ENCODE measurements at regions of chr16 and their contacts with region 1.

Region 1: GRCh38 chr16:84952335-84953189 is 58.8 kb downstream of the ZDHHC7 start:
- DNase-seq: peak; percentile 80
- ATAC-seq: peak; percentile 89 to 97
- H3K4me3 ChIP-seq: no peak overlapping the region
- H3K27ac ChIP-seq: no peak overlapping the region
- H3K4me1 ChIP-seq: no peaks in the 10 kb centered on the region
- CTCF ChIP-seq: peak; percentile 78
- EP300 ChIP-seq: no peak
- POLR2A ChIP-seq: no peak
- RAD21 ChIP-seq: peak; percentile 68 to 81

Region 2: DNA sequence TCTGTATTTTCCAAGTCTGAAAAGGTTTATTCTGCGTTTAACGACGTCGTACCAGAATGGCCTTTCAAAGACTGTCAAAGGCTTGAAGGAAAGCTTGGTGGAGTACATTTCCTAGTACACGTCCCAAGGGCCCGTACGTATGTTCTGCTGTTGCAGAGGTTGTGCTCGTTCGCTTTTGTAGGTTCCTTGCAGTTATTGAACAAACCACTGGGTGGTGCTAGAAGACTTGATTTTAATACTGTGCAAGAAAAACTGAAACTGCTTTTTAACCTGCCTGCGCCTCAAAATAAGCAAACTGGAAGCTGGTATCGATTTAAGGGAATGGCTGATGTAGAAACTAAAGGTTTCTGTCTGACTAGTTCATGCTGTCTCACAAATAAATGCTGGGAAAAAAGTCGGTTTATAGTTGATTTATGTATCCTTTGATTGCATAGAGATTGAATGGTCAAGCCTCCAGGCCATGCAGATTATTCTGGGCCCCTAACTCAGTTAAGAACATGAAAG is 198.2 kb before region 1 on chr16:
- CTCF ChIA-PET with region 1: interaction called, 219 read pairs
- POLR2A ChIA-PET with region 1: no interaction called
- DNase-seq: peak; percentile 78 to 86
- ATAC-seq: peak; percentile 88 to 90
- H3K4me3 ChIP-seq: no peak overlapping the region
- H3K27ac ChIP-seq: no peak overlapping the region
- H3K4me1 ChIP-seq: peaks cover 25% of the 10 kb centered on the region
- CTCF ChIP-seq: peak; percentile 89
- EP300 ChIP-seq: no peak
- POLR2A ChIP-seq: no peak
- RAD21 ChIP-seq: peak; percentile 79 to 86

Region 3: GRCh38 chr16:84795329-84796053 is 157.1 kb before region 1 on chr16:
- CTCF ChIA-PET with region 1: interaction called, 18 read pairs
- POLR2A ChIA-PET with region 1: no interaction called
- DNase-seq: no peak
- ATAC-seq: no peak; a peak in 1 of 6 replicates
- H3K4me3 ChIP-seq: no peak overlapping the region
- H3K27ac ChIP-seq: no peak overlapping the region
- H3K4me1 ChIP-seq: no peaks in the 10 kb centered on the region
- CTCF ChIP-seq: no peak
- EP300 ChIP-seq: no peak
- POLR2A ChIP-seq: no peak
- RAD21 ChIP-seq: no peak

Region 4: GRCh38 chr16:84919269-84919668 is 33.3 kb before region 1 on chr16:
- CTCF ChIA-PET with region 1: interaction called, 90 read pairs
- POLR2A ChIA-PET with region 1: no interaction called
- DNase-seq: no peak
- ATAC-seq: no peak
- H3K4me3 ChIP-seq: no peak overlapping the region
- H3K27ac ChIP-seq: no peak overlapping the region
- H3K4me1 ChIP-seq: no peaks in the 10 kb centered on the region
- CTCF ChIP-seq: no peak
- EP300 ChIP-seq: no peak
- POLR2A ChIP-seq: no peak
- RAD21 ChIP-seq: no peak

Region 5: GRCh38 chr16:84940670-84941551 is 11.7 kb before region 1 on chr16:
- CTCF ChIA-PET with region 1: interaction called, 42 read pairs
- POLR2A ChIA-PET with region 1: interaction called, 4 read pairs
- DNase-seq: no peak
- ATAC-seq: peak in 1 of 2 experiments; percentile 15; a peak in 2 of 6 replicates
- H3K4me3 ChIP-seq: no peak overlapping the region
- H3K27ac ChIP-seq: no peak overlapping the region
- H3K4me1 ChIP-seq: no peaks in the 10 kb centered on the region
- CTCF ChIP-seq: no peak
- EP300 ChIP-seq: no peak
- POLR2A ChIP-seq: no peak
- RAD21 ChIP-seq: no peak

Region 6: DNA sequence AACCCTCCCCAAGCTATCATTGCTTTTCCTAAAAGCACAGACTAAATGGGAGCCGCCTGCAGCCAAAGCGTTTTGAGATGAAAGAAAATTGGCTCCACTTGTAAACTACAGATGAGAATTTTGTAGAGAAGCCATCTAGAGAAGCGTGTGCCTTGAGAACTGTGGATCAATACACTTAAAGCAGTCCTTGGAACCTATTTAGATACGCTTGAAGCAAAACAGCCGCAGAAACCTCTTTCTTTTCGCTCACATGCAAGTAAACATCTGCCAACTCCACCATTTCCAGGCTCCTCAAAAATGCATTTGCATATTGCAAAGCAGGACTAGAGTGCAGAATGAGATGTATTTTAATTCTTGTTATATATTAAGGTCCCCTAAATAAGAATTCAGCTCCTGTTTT is 88.1 kb after region 1 on chr16:
- CTCF ChIA-PET with region 1: no interaction called
- POLR2A ChIA-PET with region 1: no interaction called
- DNase-seq: no peak
- ATAC-seq: no peak
- H3K4me3 ChIP-seq: no peak overlapping the region
- H3K27ac ChIP-seq: no peak overlapping the region
- H3K4me1 ChIP-seq: peaks cover 11% of the 10 kb centered on the region; the same call in 2 of the 3 replicates
- CTCF ChIP-seq: no peak
- EP300 ChIP-seq: no peak
- POLR2A ChIP-seq: no peak
- RAD21 ChIP-seq: no peak

Region 7: DNA sequence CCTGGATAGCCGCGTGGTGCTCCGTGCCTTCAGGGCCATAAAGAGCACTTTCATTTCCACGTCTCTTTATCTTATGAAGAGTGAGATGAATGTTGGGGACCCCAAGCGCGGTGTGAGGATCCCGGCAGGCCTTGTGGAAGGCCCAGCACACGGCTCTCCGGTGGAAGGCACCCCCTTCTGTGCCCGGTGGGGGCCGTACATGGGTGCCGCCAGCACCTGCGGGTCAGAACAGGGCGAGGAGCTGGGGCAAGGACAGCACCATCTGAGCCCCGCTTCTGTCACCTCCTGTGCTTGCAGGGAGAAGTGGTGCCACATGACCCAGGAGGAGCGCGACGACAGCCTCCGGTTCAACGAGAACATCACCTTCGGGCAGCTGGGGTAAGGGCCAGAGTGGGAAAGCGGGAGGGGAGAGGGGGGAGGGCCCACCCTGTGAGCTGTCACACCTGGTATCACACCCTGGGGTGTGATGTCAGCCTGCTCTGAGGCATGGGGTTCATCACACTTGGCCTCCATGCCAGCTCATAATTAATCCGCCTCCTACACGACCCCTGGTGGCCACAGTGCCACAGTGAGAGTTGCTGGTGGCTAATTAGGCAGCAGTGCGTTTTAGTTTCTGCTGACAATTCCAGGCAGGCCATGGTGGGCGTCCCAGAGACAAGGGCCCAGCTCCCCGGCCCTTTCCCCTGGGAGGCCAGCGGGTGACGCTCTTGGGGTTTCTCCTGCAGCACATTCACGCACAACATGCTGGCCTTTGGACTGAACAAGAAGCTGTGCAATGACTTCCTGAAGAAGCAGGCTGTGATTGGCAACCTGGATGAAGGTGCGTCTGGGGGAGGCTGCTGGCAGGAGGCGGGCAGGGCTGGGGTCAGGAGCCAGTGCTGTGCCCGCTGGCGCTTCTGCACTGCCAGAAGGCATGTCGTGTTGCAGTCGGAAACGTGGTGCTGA is 134.1 kb after region 1 on chr16:
- CTCF ChIA-PET with region 1: interaction called, 10 read pairs
- POLR2A ChIA-PET with region 1: no interaction called
- DNase-seq: peak; percentile 70 to 95
- ATAC-seq: peak; percentile 75 to 91
- H3K4me3 ChIP-seq: no peak overlapping the region
- H3K27ac ChIP-seq: peak overlapping the region; percentile 41 to 71; a peak in 4 of 6 replicates
- H3K4me1 ChIP-seq: peaks cover 4% of the 10 kb centered on the region; the same call in 2 of the 3 replicates
- CTCF ChIP-seq: peak; percentile 74
- EP300 ChIP-seq: no peak
- POLR2A ChIP-seq: no peak
- RAD21 ChIP-seq: peak; percentile 76 to 80

Measured in A549 (cell line).